ENCODE measurements at regions of chrX and their contacts with region 1.

Region 1: GRCh38 chrX:155094468-155095061 is 23.3 kb downstream of the BRCC3 start:
- DNase-seq: no peak
- H3K4me3 ChIP-seq: no peak overlapping the region
- H3K27ac ChIP-seq: no peak overlapping the region
- H3K4me1 ChIP-seq: no peaks in the 10 kb centered on the region
- H3K27me3 ChIP-seq: no peaks in the 10 kb centered on the region
- CTCF ChIP-seq: peak; percentile 13 to 62 (median 43)
- POLR2A ChIP-seq: no peak

Region 2: DNA sequence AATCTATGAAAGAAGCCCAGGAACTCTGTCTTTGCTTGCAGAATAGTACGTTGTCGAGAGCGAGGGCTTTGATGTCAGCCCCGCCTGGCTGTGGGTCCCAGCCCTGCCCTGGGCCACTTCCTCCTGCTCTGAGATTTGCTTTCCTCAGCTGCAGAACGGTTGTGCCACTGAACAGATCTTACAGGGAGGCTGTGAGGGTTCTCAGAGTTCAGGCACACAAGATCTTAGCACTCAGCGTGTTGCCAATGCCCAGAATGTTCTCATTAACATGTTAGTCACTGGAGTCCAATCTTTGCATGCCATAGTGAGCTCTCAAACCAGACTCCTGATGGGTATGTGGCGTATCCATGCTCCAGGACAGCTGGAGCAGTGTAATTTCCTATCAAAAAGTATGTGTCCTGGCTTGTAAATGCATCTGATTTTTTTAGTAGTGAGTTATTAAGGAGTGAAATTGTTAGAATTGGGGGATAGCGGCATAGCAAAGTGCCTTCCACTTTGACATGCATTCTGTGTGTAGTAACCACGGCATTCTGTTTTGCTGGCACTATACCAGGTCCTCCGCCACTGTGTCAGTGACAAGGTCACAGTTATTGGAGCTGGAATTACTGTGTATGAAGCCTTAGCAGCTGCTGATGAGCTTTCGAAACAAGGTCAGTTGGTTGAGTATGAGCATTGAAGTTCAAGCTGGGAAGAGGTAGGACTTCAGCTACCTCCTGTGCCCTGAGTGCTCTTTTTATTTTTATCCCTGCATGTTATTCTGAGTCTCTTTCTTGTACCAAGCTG is 767.3 kb before region 1 on chrX:
- intact Hi-C with region 1: no loop called
- DNase-seq: no peak
- H3K4me3 ChIP-seq: peak overlapping the region in 1 of 8 donors; percentile 12
- H3K27ac ChIP-seq: peak overlapping the region in 7 of 8 donors; percentile 15 to 64 (median 49)
- H3K4me1 ChIP-seq: peaks cover 4 to 23% (median 20%) of the 10 kb centered on the region in 6 donors
- H3K27me3 ChIP-seq: peaks cover 0 to 8% (median 0%) of the 10 kb centered on the region in 7 donors
- CTCF ChIP-seq: peak in 3 of 11 experiments; percentile 8 to 30 (median 18)
- POLR2A ChIP-seq: no peak

Region 3: DNA sequence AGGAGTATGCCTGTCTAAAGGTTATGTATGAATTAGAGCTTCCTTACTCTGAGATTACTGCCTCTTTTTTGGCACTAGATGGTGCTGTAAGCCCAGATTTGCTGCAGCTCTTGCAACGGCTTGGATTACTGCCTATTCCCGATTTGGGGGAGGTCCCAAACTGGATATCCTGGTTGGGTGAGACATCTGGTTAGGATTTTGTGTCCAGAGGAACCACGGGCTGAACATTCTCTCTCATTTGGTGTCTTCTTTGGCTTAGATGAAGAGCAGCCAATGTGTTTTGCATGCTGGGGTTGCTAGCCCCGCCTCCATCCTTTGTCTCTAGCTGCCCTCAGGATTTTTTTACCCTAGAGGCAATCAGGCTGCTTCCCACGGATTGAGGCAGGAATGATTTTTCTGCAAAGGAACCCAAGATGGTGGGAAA is 176.5 kb before region 1 on chrX:
- intact Hi-C with region 1: no loop called
- DNase-seq: no peak
- H3K4me3 ChIP-seq: peak overlapping the region in 1 of 8 donors; percentile 53
- H3K27ac ChIP-seq: no peak overlapping the region
- H3K4me1 ChIP-seq: no peaks in the 10 kb centered on the region
- H3K27me3 ChIP-seq: no peaks in the 10 kb centered on the region
- CTCF ChIP-seq: peak in 10 of 11 experiments; percentile 24 to 55 (median 47)
- POLR2A ChIP-seq: no peak

Region 4: GRCh38 chrX:155755706-155756337 is 661.3 kb after region 1 on chrX:
- intact Hi-C with region 1: no loop called
- DNase-seq: no peak
- H3K4me3 ChIP-seq: no peak overlapping the region
- H3K27ac ChIP-seq: no peak overlapping the region
- H3K4me1 ChIP-seq: no peaks in the 10 kb centered on the region
- H3K27me3 ChIP-seq: no peaks in the 10 kb centered on the region
- CTCF ChIP-seq: no peak
- POLR2A ChIP-seq: no peak

Region 5: GRCh38 chrX:155819966-155820491 is 725.5 kb after region 1 on chrX:
- intact Hi-C with region 1: loop called (anchors 5 kb)
- DNase-seq: no peak
- H3K4me3 ChIP-seq: no peak overlapping the region
- H3K27ac ChIP-seq: no peak overlapping the region
- H3K4me1 ChIP-seq: no peaks in the 10 kb centered on the region
- H3K27me3 ChIP-seq: no peaks in the 10 kb centered on the region
- CTCF ChIP-seq: peak in 10 of 11 experiments; percentile 21 to 67 (median 55)
- POLR2A ChIP-seq: no peak